ENCODE measurements at regions of chr11 and their contacts with region 1.

Region 1: DNA sequence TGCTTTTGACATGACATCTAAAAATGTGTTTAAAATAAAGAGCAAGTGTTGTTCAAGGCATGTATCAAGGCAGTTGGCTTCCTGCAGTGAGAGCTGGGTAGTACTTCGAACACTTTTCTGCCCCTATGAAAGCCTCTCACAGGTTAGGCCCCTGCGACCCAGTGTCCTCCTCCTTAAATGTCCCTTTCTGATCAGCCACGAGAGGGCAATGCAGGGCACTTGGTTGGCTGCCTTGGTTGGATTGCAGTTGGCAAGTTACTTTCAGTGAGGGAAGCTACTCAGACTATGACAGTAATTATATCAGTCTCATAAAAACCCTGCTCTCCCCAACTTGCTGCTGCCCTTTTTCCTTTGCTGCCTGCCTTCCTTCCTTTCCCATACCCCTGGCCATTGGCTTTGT is 743.8 kb downstream of the NTM start:
- DNase-seq: peak in 3 of 5 donors; percentile 35 to 52 (median 41)
- ATAC-seq: peak; percentile 44 to 70 (median 66)
- H3K4me3 ChIP-seq: no peak overlapping the region
- H3K27ac ChIP-seq: no peak overlapping the region
- H3K4me1 ChIP-seq: peaks cover 0 to 17% (median 0%) of the 10 kb centered on the region in 12 donors
- H3K27me3 ChIP-seq: peaks cover 0 to 9% (median 0%) of the 10 kb centered on the region in 9 donors
- CTCF ChIP-seq: peak; percentile 25 to 57 (median 45)
- POLR2A ChIP-seq: no peak

Region 2: DNA sequence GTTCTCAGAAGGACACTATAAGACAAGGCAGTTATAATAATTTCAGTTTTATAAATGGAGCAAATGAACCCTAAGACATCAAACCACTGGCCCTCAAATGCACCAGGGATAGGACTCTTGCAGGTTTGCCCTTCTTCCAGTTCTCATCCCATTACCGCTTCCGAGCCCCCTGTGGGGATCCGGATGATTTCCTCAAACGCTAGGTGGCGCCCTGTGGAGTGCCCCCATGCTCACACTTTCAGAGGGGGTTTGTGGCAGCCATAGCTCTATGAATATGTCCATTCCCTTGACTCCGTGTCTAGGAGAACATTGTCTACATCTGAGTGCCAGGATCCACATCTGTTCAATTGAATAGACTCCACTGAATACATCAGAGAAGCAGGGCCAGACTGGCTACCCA is 72.5 kb after region 1 on chr11:
- intact Hi-C with region 1: no loop called
- DNase-seq: no peak
- ATAC-seq: no peak
- H3K4me3 ChIP-seq: no peak overlapping the region
- H3K27ac ChIP-seq: no peak overlapping the region
- H3K4me1 ChIP-seq: no peaks in the 10 kb centered on the region
- H3K27me3 ChIP-seq: no peaks in the 10 kb centered on the region
- CTCF ChIP-seq: peak in 8 of 12 donors; percentile 7 to 33 (median 18)
- POLR2A ChIP-seq: no peak

Region 3: DNA sequence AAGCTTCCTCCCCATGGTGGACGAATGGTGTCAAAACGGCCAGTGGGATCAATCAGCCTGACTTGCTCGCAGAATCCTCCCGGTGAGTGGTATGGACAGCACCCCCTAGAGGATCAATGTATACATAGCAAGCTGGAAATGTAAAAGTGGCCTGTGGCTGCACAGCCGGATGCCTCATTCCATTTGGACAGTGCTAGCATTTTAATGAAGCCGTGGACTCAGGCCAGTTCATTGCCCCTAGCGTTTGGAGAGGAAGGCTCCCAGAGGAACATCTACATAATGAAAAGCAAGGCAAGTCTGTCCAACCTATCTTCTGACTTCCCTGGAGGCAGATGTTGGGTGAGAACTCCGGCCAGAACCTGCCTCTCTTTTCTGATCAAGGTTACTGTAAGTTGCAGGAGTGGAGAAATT is 198.5 kb after region 1 on chr11:
- intact Hi-C with region 1: loop called in 4 of 10 experiments (anchors 5 to 10 kb)
- DNase-seq: no peak
- ATAC-seq: peak in 2 of 4 donors; percentile 48 to 52
- H3K4me3 ChIP-seq: no peak overlapping the region
- H3K27ac ChIP-seq: no peak overlapping the region
- H3K4me1 ChIP-seq: peaks cover 0 to 7% (median 0%) of the 10 kb centered on the region in 12 donors
- H3K27me3 ChIP-seq: no peaks in the 10 kb centered on the region
- CTCF ChIP-seq: peak; percentile 39 to 67 (median 56)
- POLR2A ChIP-seq: no peak

Measured in heart left ventricle (tissue), 16 donors.